Left colon (tissue), 2 donors: ENCODE measurements at regions of chr18 and their contacts with region 1.

Region 1: DNA sequence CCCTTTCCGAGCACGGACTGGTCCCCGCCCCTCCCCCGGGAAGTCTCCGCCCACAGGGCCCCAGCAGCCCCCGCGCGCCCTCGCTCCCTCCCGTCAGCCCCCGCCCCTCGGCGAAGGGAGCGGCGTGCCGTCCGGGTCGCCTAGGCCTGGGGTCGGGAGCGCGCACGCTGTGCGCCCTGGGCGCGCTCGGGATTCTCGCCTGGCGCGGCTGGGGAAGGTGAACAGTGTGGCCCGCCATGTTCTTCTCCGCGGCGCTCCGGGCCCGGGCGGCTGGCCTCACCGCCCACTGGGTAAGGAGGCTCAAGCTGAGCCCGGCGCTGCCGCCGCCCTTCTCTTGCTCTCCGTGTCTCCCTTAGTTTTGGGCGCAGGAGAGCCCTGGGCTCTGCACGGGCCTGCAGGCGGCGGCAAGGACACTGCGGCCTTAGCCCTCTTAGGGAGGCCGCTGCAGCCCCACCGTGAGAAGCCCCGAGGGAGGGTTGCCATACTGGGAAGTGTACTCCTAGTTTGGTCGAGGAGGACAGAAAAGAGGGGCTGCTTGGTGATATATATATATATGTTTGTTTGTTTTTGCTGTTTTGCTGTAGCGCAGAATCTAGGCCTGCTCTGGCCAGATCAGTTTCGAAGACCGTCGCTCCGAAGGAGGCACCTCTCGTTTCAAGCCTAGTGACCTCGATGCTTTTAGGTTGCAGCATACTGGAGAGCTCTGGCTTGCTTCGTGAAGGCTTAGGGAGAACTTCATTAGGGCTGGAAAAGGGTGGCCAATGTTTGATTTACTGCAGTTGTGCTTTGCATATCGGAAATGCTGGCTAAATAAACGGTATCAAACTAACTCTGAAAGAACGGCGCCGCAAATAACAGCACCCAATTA is at the start of gene NDUFV2:
- DNase-seq: peak; percentile 96 to 99
- ATAC-seq: peak; percentile 97
- total RNA-seq, gene NDUFV2: 167 to 191 TPM

Region 2: GRCh38 chr18:9136315-9137155 is 33.8 kb after region 1 on chr18 and contains the start of gene ANKRD12:
- intact Hi-C with region 1: loop called in 1 of 2 experiments (anchors 5 kb)
- DNase-seq: peak; percentile 96 to 97
- ATAC-seq: peak; percentile 88
- total RNA-seq, gene ANKRD12: 44.7 to 64.3 TPM